HCT116 (cell line): ENCODE measurements at regions of chr19 and their contacts with region 1.

Region 1: GRCh38 chr19:15251749-15252397 is 19.6 kb upstream of the EPHX3 start:
- DNase-seq: no peak
- ATAC-seq: peak; percentile 81
- H3K4me3 ChIP-seq: no peak overlapping the region
- H3K27ac ChIP-seq: no peak overlapping the region
- H3K4me1 ChIP-seq: peaks cover 14 to 28% of the 10 kb centered on the region in 2 experiments
- H3K27me3 ChIP-seq: no peaks in the 10 kb centered on the region
- CTCF ChIP-seq: peak; percentile 26 to 49 (median 48); a peak in 5 of 6 replicates
- POLR2A ChIP-seq: no peak
- RAD21 ChIP-seq: peak; percentile 53

Region 2: GRCh38 chr19:14871619-14872230 is 380.1 kb before region 1 on chr19:
- CTCF ChIA-PET with region 1: no interaction called
- POLR2A ChIA-PET with region 1: no interaction called
- RAD21 ChIA-PET with region 1: no interaction called
- intact Hi-C with region 1: loop called (anchors 5 kb)
- DNase-seq: peak; percentile 22
- ATAC-seq: peak; percentile 62
- H3K4me3 ChIP-seq: no peak overlapping the region
- H3K27ac ChIP-seq: no peak overlapping the region
- H3K4me1 ChIP-seq: no peaks in the 10 kb centered on the region
- H3K27me3 ChIP-seq: peaks cover 45% of the 10 kb centered on the region
- CTCF ChIP-seq: peak; percentile 46 to 80 (median 59); a peak in 5 of 6 replicates
- POLR2A ChIP-seq: no peak
- RAD21 ChIP-seq: peak; percentile 73